ENCODE measurements at regions of chr14 and their contacts with region 1.

Region 1: DNA sequence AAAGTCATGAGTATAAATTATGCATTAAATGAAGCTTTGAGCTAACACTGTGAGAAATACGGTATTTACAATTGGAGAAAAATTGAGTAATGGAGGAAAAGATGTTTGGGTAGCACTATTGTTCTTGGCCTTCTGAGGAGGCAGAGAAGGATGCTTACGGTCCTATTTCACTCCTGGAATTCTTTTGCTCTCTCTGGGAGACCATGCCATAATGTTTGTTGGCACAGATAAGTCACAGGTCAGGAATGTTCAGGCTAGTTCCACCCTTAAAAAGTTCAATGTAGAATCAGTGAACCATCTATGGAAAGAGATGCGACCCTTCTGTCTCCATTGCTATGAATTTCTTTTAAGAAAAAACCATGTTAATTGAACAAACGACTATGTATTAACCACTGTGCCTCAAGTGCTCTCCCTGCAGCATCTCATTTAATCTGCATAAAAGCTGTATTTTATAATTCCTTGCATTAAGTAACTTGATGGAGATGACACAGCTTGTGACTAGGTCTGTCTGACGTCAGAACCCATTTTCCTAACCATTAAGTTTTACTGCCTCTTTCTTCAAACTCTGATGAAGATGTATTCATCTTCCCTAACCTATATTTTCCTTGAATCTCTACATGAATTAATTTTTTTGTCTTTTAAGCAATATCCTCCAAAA is 9.5 kb downstream of the BATF start:
- DNase-seq: no peak
- H3K4me3 ChIP-seq: no peak overlapping the region
- H3K4me3 Mint-ChIP-seq: peak overlapping the region in 4 of 8 donors; percentile 33 to 64 (median 44)
- H3K27ac ChIP-seq: peak overlapping the region; percentile 40
- H3K27ac Mint-ChIP-seq: peak overlapping the region; percentile 44 to 93 (median 81)
- H3K4me1 ChIP-seq: peaks cover 72% of the 10 kb centered on the region
- H3K4me1 Mint-ChIP-seq: peaks cover 53 to 73% (median 65%) of the 10 kb centered on the region in 4 donors
- H3K27me3 ChIP-seq: no peaks in the 10 kb centered on the region
- H3K27me3 Mint-ChIP-seq: no peaks in the 10 kb centered on the region

Region 2: GRCh38 chr14:75542588-75543091 is 10.9 kb after region 1 on chr14:
- CTCF ChIA-PET with region 1: interaction called, 74 read pairs
- POLR2A ChIA-PET with region 1: interaction called, 292 read pairs
- intact Hi-C with region 1: no loop called
- DNase-seq: peak; percentile 67 to 93 (median 71)
- H3K4me3 ChIP-seq: peak overlapping the region; percentile 34 to 42
- H3K4me3 Mint-ChIP-seq: peak overlapping the region; percentile 66 to 89 (median 82)
- H3K27ac ChIP-seq: peak overlapping the region; percentile 94
- H3K27ac Mint-ChIP-seq: peak overlapping the region; percentile 96 to 99 (median 97)
- H3K4me1 ChIP-seq: peaks cover 71% of the 10 kb centered on the region
- H3K4me1 Mint-ChIP-seq: peaks cover 48 to 79% (median 67%) of the 10 kb centered on the region in 4 donors
- H3K27me3 ChIP-seq: no peaks in the 10 kb centered on the region
- H3K27me3 Mint-ChIP-seq: no peaks in the 10 kb centered on the region